ENCODE measurements at regions of chr13 and their contacts with region 1.

Region 1: GRCh38 chr13:97125810-97126738 is 96.1 kb upstream of the MBNL2 start:
- DNase-seq: peak; percentile 61
- ATAC-seq: peak; percentile 39
- H3K4me3 ChIP-seq: peak overlapping the region; percentile 35; the same call in 1 of the 2 replicates
- H3K27ac ChIP-seq: peak overlapping the region; percentile 81
- H3K4me1 ChIP-seq: peaks cover 51% of the 10 kb centered on the region
- H3K27me3 ChIP-seq: no peaks in the 10 kb centered on the region
- CTCF ChIP-seq: no peak

Region 2: GRCh38 chr13:97109841-97110492 is 16.1 kb before region 1 on chr13:
- CTCF ChIA-PET with region 1: interaction called, 9 read pairs
- POLR2A ChIA-PET with region 1: no interaction called
- intact Hi-C with region 1: loop called (anchors 1 kb)
- DNase-seq: peak; percentile 82
- ATAC-seq: peak; percentile 94
- H3K4me3 ChIP-seq: no peak overlapping the region
- H3K27ac ChIP-seq: no peak overlapping the region
- H3K4me1 ChIP-seq: peaks cover 12% of the 10 kb centered on the region
- H3K27me3 ChIP-seq: no peaks in the 10 kb centered on the region
- CTCF ChIP-seq: peak; percentile 88

Region 3: GRCh38 chr13:97141564-97142005 is 15.5 kb after region 1 on chr13:
- CTCF ChIA-PET with region 1: interaction called, 10 read pairs
- POLR2A ChIA-PET with region 1: no interaction called
- intact Hi-C with region 1: no loop called
- DNase-seq: peak; percentile 92
- ATAC-seq: peak; percentile 99
- H3K4me3 ChIP-seq: peak overlapping the region; percentile 29
- H3K27ac ChIP-seq: peak overlapping the region; percentile 73
- H3K4me1 ChIP-seq: peaks cover 25% of the 10 kb centered on the region
- H3K27me3 ChIP-seq: no peaks in the 10 kb centered on the region
- CTCF ChIP-seq: no peak

Region 4: GRCh38 chr13:97257800-97258799 is 132.0 kb after region 1 on chr13:
- CTCF ChIA-PET with region 1: no interaction called
- POLR2A ChIA-PET with region 1: interaction called, 3 read pairs
- intact Hi-C with region 1: loop called (anchors 1 kb)
- DNase-seq: peak; percentile 82
- ATAC-seq: peak; percentile 50
- H3K4me3 ChIP-seq: peak overlapping the region; percentile 28; the same call in 1 of the 2 replicates
- H3K27ac ChIP-seq: peak overlapping the region; percentile 93
- H3K4me1 ChIP-seq: peaks cover 67% of the 10 kb centered on the region
- H3K27me3 ChIP-seq: no peaks in the 10 kb centered on the region
- CTCF ChIP-seq: peak; percentile 39

Region 5: GRCh38 chr13:97295283-97296182 is 169.5 kb after region 1 on chr13:
- CTCF ChIA-PET with region 1: no interaction called
- POLR2A ChIA-PET with region 1: no interaction called
- intact Hi-C with region 1: loop called (anchors 2 kb)
- DNase-seq: peak; percentile 92
- ATAC-seq: peak; percentile 85
- H3K4me3 ChIP-seq: peak overlapping the region; percentile 36; the same call in 1 of the 2 replicates
- H3K27ac ChIP-seq: peak overlapping the region; percentile 99
- H3K4me1 ChIP-seq: peaks cover 32% of the 10 kb centered on the region
- H3K27me3 ChIP-seq: no peaks in the 10 kb centered on the region
- CTCF ChIP-seq: no peak